Panc1 (cell line): ENCODE measurements at regions of chrX and their contacts with region 1.

Region 1: DNA sequence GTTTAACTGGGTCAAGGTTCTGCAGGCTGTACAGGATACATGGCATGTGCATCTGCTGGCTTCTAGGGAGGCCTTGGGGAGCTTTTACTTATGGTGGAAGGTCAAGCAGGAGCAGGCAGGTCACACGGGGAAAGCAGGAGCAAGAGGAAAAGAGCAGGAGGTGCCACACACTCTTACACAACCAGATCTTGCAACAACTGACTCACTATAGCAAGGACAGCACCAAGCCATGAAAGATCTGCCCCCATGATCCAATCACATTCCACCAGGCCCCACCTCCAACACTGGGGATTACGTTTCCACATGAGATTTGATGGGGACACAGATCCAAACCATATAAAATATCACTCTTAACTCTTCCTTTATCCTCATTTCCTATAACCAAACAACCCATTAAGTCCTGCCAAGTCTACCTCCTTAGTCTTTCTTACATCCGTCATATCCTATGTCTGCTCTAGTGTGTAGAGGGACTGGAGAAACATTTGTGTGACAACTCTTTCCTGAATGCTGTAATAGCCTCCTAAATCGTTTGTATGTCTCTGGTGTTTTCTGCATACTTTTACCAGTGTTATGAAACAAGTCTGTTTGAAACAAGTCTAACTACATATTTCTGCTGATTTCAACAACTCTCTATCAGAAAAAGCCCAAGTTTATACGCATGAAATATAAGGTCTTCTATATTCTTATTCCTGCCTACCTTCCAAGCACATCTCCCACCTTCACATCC is 8.3 kb upstream of the RAP2C start:
- DNase-seq: no peak
- ATAC-seq: no peak
- H3K4me3 ChIP-seq: no peak overlapping the region
- H3K27ac ChIP-seq: no peak overlapping the region
- H3K4me1 ChIP-seq: no peaks in the 10 kb centered on the region
- H3K27me3 ChIP-seq: no peaks in the 10 kb centered on the region
- CTCF ChIP-seq: no peak

Region 2: DNA sequence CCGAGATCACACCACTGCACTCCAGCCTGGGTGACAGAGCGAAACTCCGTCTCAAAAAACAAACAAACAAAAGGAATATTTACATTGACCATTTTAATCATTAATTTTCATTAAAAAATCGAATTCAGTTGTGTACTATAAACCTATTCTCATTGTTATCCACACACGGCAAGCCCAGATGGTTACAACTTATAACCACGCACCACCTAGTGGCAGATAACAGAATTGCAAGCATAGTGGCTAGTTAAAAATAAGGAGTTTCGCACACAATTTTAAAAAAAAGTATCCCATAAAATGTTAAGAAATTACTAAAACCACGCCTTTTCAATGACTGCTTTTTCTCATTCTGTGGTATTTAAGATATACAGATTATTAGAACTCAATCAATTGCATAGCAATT is 235.9 kb after region 1 on chrX:
- CTCF ChIA-PET with region 1: no interaction called
- POLR2A ChIA-PET with region 1: no interaction called
- in situ Hi-C with region 1: no loop called
- intact Hi-C with region 1: loop called (anchors 10 kb)
- DNase-seq: no peak
- ATAC-seq: no peak
- H3K4me3 ChIP-seq: no peak overlapping the region
- H3K27ac ChIP-seq: no peak overlapping the region
- H3K4me1 ChIP-seq: no peaks in the 10 kb centered on the region
- H3K27me3 ChIP-seq: 0 out of 2 replicates have a peak, but pooled peaks cover 1% of the 10 kb centered on the region
- CTCF ChIP-seq: peak; percentile 72

Region 3: GRCh38 chrX:132631579-132632232 is 404.2 kb after region 1 on chrX:
- CTCF ChIA-PET with region 1: interaction called, 7 read pairs
- POLR2A ChIA-PET with region 1: no interaction called
- in situ Hi-C with region 1: no loop called
- intact Hi-C with region 1: loop called (anchors 2 kb)
- DNase-seq: peak; percentile 30
- ATAC-seq: peak; percentile 81
- H3K4me3 ChIP-seq: no peak overlapping the region
- H3K27ac ChIP-seq: no peak overlapping the region
- H3K4me1 ChIP-seq: no peaks in the 10 kb centered on the region
- H3K27me3 ChIP-seq: peaks cover 20% of the 10 kb centered on the region
- CTCF ChIP-seq: peak; percentile 75